Aorta (tissue), 5 donors: ENCODE measurements at regions of chr5 and their contacts with region 1.

Region 1: DNA sequence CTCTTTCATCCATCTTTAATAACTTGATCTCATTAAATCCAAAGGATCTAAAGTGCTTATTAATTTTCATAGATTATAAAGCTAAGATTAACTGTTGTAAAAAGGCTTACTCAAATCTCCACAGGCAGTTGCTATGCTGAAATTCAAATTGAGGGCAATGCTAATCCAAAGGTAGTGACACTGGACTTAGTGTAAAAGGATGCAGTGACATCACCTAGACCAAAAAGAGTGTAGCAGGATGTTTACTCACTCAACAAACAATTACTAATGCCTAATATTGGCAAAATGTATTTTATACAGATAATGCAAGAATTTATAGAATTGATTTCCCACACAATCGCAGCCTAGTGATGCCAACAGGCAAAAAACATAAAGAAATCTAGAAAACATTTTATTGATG is 756.2 kb downstream of the CDH9 start:
- DNase-seq: no peak
- ATAC-seq: no peak
- H3K4me3 ChIP-seq: no peak overlapping the region
- H3K27ac ChIP-seq: no peak overlapping the region
- H3K4me1 ChIP-seq: no peaks in the 10 kb centered on the region
- H3K27me3 ChIP-seq: no peaks in the 10 kb centered on the region

Region 2: GRCh38 chr5:25944786-25945185 is 337.4 kb before region 1 on chr5:
- intact Hi-C with region 1: no loop called
- DNase-seq: no peak
- ATAC-seq: no peak
- H3K4me3 ChIP-seq: no peak overlapping the region
- H3K27ac ChIP-seq: no peak overlapping the region
- H3K4me1 ChIP-seq: no peaks in the 10 kb centered on the region
- H3K27me3 ChIP-seq: no peaks in the 10 kb centered on the region

Region 3: DNA sequence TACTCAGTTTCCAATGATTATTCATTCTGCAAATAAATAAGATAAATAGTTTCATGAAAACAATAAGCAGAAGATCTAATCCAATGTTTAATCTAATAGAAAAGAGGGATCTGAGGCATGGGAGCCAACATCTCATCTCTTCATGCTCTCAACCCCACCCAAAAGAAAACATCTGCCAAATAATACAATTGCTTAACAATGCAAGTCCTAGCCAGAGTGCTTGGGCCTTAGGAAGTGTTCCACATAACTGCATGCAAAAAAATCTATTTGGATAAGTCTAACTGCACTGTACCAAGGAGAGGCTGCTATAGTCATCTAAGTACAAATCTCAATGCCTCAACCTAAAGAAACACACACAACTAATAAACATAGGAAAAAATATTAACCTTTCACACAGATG is 150.2 kb after region 1 on chr5:
- intact Hi-C with region 1: loop called in 1 of 2 experiments (anchors 10 kb)
- DNase-seq: no peak
- ATAC-seq: peak; percentile 55
- H3K4me3 ChIP-seq: no peak overlapping the region
- H3K27ac ChIP-seq: no peak overlapping the region
- H3K4me1 ChIP-seq: no peaks in the 10 kb centered on the region
- H3K27me3 ChIP-seq: no peaks in the 10 kb centered on the region